WTC11 (cell line): ENCODE measurements at regions of chr22 and their contacts with region 1.

Region 1: DNA sequence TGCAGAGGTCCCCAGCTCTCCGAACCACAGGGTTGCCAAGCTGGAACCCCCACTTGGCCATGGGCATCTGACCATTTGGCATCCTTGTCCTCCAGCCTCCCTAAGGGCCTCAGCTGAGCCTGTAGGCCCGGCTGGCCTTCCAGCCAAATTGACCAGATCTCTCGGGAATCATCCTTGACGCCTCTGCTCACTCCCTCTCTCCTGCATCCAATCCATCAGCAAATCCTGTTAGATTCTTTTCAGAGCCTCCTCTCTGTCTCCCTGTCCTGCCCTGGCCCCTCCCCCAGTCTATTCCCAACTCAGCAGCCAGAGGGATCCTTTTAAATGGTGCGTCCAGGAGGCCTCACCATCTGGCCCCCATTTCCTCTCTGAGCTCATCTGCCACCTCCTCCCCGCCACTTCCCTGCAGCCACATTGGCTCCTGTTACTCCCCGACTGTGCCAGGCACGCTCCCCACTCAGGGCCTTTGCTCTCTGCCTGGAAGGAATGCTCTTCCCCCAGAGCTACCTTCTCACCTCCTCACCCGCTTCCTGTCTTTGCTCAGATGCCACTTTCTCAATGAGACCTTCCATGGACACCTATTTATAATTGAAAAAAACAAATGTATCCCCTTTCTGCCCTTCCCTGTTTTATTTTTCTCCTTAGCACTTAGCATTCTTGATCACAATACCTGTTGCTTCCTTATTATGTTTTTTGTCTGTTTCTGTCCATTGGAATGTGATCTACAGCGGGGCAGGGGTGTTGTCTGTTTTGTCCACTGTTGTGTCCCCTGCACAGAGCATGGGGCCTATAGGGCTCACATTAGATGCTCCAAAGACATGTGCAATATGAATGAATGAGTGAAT is 78.1 kb downstream of the NFAM1 start:
- DNase-seq: peak; percentile 56
- ATAC-seq: peak; percentile 91
- H3K4me3 Mint-ChIP-seq: no peak overlapping the region
- H3K27ac Mint-ChIP-seq: peak overlapping the region; percentile 30
- H3K4me1 Mint-ChIP-seq: peaks cover 19% of the 10 kb centered on the region
- H3K27me3 Mint-ChIP-seq: peaks cover 11% of the 10 kb centered on the region
- CTCF ChIP-seq: no peak

Region 2: GRCh38 chr22:42313804-42314581 is 40.1 kb before region 1 on chr22:
- CTCF ChIA-PET with region 1: no interaction called
- POLR2A ChIA-PET with region 1: no interaction called
- DNase-seq: peak; percentile 86
- ATAC-seq: peak; percentile 83
- H3K4me3 Mint-ChIP-seq: no peak overlapping the region
- H3K27ac Mint-ChIP-seq: peak overlapping the region; percentile 84; the same call in 1 of the 2 replicates
- H3K4me1 Mint-ChIP-seq: peaks cover 39% of the 10 kb centered on the region
- H3K27me3 Mint-ChIP-seq: no peaks in the 10 kb centered on the region; the same call in 1 of the 2 replicates
- CTCF ChIP-seq: 0 out of 2 replicates have a peak, but pooled peaks have one; percentile 31

Region 3: DNA sequence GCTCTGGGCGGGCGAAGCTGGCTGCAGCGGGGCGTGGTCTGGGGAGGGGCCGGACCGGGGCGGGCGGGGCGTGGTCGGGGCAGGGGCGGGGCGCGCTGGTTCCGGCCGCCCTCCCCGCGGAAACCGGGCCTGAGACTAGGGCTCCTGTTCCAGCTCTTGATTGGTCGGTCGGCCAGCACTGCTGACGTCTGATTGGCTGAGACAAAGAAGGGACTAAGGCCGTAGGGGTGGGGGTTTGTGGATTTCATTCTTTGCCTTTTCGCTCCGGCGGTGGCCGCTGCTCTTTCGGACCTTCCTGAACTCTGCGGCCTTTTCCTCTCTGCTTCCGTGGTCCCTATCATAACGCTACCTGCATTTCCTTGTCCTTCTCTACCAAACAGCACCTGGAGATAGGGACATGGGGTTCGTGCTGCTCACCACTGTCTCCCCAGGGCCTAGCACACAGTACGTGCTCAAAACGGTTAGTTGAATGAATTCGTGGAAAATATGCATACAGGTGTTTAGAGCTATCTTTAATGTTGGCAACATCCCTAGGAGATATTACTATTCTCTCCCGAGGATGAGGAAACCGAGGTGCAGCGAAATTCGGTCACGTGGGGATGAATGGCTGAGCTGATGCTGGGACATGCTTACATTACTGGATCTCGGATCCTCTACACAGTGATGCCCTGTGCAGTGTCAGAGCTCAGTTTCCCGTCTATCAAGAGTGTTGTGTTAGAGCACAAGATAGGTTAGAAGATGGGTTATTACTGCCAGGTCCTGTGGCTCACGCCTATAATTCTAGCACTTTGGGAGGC is 15.3 kb after region 1 on chr22:
- CTCF ChIA-PET with region 1: interaction called, 12 read pairs
- POLR2A ChIA-PET with region 1: interaction called, 6 read pairs
- DNase-seq: peak; percentile 92
- ATAC-seq: peak; percentile 86
- H3K4me3 Mint-ChIP-seq: peak overlapping the region; percentile 86
- H3K27ac Mint-ChIP-seq: peak overlapping the region; percentile 95
- H3K4me1 Mint-ChIP-seq: peaks cover 58% of the 10 kb centered on the region
- H3K27me3 Mint-ChIP-seq: no peaks in the 10 kb centered on the region; the same call in 1 of the 2 replicates
- CTCF ChIP-seq: no peak

Region 4: GRCh38 chr22:42376711-42377554 is 22.8 kb after region 1 on chr22:
- CTCF ChIA-PET with region 1: interaction called, 11 read pairs
- POLR2A ChIA-PET with region 1: interaction called, 3 read pairs
- DNase-seq: peak; percentile 65
- ATAC-seq: peak; percentile 78
- H3K4me3 Mint-ChIP-seq: no peak overlapping the region
- H3K27ac Mint-ChIP-seq: no peak overlapping the region
- H3K4me1 Mint-ChIP-seq: peaks cover 43% of the 10 kb centered on the region
- H3K27me3 Mint-ChIP-seq: peaks cover 17% of the 10 kb centered on the region
- CTCF ChIP-seq: no peak

Region 5: DNA sequence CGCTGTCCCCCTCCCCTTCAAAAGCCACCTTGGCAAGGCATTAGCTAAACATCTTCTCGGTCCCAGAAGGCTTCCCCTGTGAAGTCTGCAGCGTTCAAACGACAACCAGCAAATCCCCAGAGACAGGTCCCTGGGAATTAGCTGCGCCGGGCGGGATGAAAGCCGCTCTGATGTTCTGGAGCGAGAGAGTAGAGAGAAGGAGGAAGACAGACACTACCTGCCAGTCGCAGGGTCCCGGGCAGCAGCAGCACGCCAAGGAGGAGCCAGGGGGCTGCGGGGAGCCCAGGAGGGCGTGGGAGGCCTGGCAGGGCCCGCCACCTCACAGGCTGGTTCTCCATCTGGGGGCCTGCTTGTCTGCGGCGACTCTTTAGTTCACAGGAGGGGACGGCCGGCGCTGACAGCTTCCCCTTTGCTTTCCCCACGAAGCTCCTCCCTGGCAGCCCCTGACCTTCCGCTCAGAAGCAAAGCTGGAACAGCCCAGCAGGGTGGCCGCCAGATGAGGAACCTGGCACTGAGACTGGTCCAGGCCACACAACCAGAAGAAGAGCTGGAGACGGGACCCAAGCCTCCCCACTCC is 78.0 kb after region 1 on chr22 and contains the start of gene NFAM1:
- CTCF ChIA-PET with region 1: interaction called, 10 read pairs
- POLR2A ChIA-PET with region 1: no interaction called
- DNase-seq: no peak
- ATAC-seq: no peak
- H3K4me3 Mint-ChIP-seq: no peak within 1 kb of the TSS
- H3K27ac Mint-ChIP-seq: peak within 1 kb of the TSS; percentile 46; the same call in 1 of the 2 replicates
- H3K4me1 Mint-ChIP-seq: peaks cover 26% of the 10 kb centered on the region
- H3K27me3 Mint-ChIP-seq: peaks cover 14% of the 10 kb centered on the region
- CTCF ChIP-seq: no peak
- total RNA-seq, gene NFAM1: 0.92 to 1.6 TPM (median 1.2 TPM) in 3 replicates